Endothelial cell of umbilical vein (primary cell): ENCODE measurements at regions of chr5 and their contacts with region 1.

Region 1: GRCh38 chr5:5421961-5422818 is at the start of gene ICE1:
- DNase-seq: peak; percentile 97
- H3K4me3 ChIP-seq: peak within 1 kb of the TSS; percentile 75 to 78 (median 78)
- H3K27ac ChIP-seq: peak within 1 kb of the TSS; percentile 70
- H3K4me1 ChIP-seq: peaks cover 28% of the 10 kb centered on the region
- H3K27me3 ChIP-seq: no peaks in the 10 kb centered on the region
- CTCF ChIP-seq: no peak
- POLR2A ChIP-seq: peak; percentile 64
- total RNA-seq, gene ICE1: 29.1 and 32.1 TPM in 2 replicates

Region 2: DNA sequence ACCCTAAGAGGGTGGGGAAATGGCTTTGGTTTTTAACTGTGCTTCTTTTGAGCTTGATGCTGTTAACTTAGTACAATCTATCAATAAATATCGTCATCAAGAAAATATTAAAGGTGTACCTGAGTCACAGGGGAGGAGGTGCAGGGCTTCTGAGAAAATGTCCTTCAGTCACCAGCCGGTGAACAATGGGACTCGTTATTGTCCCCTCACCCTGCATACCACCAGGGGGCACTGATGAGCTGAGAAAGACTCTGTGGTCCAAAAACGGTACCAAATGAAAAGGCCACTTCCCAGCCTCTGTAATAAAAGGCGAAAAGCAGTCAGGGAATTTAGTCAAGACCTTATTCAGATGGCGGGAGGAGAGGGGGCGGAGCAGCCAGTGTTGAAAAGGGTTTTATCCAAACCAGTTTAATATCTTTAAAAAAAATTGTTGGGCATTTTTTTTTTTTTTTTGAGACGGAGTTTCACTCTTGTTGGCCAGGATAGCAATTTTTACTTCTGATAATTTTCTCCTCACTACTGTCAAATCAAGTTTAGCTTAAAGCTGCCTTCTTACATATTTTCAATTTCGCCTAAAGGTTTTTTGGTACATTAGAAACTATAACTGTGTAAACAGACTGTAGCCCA is 554.0 kb before region 1 on chr5:
- CTCF ChIA-PET with region 1: no interaction called
- POLR2A ChIA-PET with region 1: no interaction called
- dilution Hi-C with region 1: no loop called
- intact Hi-C with region 1: loop called (anchors 2 kb)
- DNase-seq: no peak
- H3K4me3 ChIP-seq: no peak overlapping the region
- H3K27ac ChIP-seq: no peak overlapping the region
- H3K4me1 ChIP-seq: no peaks in the 10 kb centered on the region
- H3K27me3 ChIP-seq: no peaks in the 10 kb centered on the region
- CTCF ChIP-seq: peak; percentile 52 to 55
- POLR2A ChIP-seq: no peak

Region 3: GRCh38 chr5:5141625-5142532 is 280.3 kb before region 1 on chr5:
- CTCF ChIA-PET with region 1: interaction called, 32 read pairs
- POLR2A ChIA-PET with region 1: no interaction called
- dilution Hi-C with region 1: no loop called
- intact Hi-C with region 1: no loop called
- DNase-seq: peak; percentile 45
- H3K4me3 ChIP-seq: no peak overlapping the region
- H3K27ac ChIP-seq: no peak overlapping the region
- H3K4me1 ChIP-seq: no peaks in the 10 kb centered on the region
- H3K27me3 ChIP-seq: peaks cover 9 to 13% of the 10 kb centered on the region in 2 experiments
- CTCF ChIP-seq: peak; percentile 39 to 46
- POLR2A ChIP-seq: no peak

Region 4: DNA sequence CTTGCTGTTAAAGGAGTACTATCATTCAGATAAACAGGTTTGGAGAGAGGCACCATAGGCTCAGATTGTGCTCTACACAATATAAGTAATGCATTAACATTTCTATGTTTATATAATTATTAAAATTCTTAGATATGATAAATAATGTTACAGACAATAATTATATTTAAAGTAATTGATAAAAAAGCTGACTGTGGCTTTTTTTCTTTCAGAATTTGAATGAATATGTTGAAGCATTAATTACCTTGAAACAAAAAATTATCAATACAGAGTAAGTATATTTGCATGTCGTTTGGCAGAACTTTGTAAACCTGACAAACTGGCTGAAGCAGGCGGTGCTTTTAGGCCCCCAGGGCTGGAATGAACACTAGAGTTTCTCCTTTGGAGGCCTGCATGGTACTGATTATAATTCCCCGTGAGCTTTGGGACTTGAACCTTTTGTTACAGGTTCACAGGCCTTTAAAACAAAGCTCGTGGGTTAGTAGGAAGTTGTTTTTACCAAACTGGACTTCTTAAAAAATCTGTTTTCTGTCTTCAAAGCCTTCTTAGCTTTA is 14.1 kb after region 1 on chr5:
- CTCF ChIA-PET with region 1: no interaction called
- POLR2A ChIA-PET with region 1: no interaction called
- dilution Hi-C with region 1: no loop called
- intact Hi-C with region 1: loop called (anchors 1 kb)
- DNase-seq: no peak
- H3K4me3 ChIP-seq: no peak overlapping the region
- H3K27ac ChIP-seq: no peak overlapping the region
- H3K4me1 ChIP-seq: peaks cover 11% of the 10 kb centered on the region
- H3K27me3 ChIP-seq: no peaks in the 10 kb centered on the region
- CTCF ChIP-seq: no peak
- POLR2A ChIP-seq: no peak

Region 5: DNA sequence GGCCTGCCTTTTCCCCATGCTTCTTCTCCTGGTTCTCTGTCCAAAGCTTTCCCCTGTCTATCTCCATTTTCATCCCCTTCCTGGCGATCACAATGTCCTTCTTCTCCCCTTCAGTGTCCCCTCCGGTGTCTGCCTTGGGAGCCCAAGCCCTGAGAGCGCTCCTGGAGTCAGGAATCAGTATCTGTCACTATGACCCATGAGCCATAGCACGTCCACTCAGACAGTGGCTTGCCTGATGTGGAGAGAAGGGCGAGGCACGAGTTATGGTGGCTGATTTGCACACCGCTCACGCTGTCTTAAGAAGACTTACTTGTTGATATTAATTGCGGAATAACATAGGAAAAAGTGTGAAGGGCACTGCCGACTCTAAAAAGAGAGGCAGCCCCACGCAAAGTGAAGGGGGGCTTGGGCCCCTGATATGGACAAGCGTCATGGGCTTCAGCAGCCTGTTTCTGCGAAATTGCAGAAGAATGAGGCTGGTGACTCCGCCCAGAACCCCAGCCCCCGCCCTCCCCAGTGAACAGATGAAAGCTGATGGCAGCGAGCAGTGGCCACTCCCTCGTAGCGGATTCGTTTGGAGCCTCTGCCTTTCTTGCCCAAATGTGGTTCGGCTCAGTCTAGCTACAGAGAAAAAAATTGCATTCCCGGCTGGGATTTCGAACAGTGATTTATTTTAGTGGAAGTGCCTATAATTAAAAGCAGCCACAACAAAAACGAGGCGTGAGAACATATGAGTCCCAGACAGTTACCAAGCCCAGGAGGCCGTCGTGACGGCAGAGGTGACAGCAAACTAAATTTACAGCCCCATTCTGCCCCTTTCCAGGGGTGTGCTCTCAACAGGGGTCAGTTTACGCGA is 150.0 kb after region 1 on chr5:
- CTCF ChIA-PET with region 1: no interaction called
- POLR2A ChIA-PET with region 1: no interaction called
- dilution Hi-C with region 1: no loop called
- intact Hi-C with region 1: no loop called
- DNase-seq: no peak
- H3K4me3 ChIP-seq: no peak overlapping the region
- H3K27ac ChIP-seq: no peak overlapping the region
- H3K4me1 ChIP-seq: no peaks in the 10 kb centered on the region
- H3K27me3 ChIP-seq: no peaks in the 10 kb centered on the region
- CTCF ChIP-seq: no peak
- POLR2A ChIP-seq: no peak

Region 6: DNA sequence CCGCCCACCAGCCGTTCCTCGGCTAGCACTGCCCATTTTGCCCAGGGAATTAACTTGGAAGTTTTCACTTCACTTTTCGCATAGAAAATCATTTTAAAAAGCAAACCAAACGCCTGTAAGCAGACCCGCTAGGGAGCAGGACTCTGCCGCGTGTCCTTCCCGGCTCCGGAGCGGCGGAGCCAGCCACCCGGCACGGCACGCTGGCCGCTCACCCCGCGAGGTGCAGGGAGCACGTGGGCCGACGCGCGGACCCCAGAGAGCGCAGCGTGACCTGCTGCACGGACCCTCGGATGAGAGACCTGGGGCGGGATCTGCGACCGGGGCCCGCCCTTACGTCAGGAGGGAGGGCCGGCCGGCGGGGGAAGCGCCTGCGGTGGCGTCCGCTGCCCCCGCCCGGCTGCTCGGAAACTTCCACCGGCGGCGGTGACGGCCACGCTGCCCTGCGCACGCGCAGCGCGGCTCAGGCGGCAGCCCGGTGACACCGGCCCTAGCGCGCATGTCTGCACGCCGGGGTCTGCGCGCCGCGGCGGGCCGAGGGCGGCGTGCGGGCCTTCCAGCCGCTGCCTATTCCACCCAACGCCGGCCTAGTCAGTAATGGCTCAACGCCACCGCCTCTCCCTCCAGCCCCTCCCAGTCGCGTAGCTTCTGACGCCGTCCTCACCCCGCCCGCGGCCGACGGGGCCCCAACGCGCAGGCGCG is 1290.5 kb after region 1 on chr5:
- CTCF ChIA-PET with region 1: no interaction called
- POLR2A ChIA-PET with region 1: no interaction called
- dilution Hi-C with region 1: no loop called
- intact Hi-C with region 1: loop called (anchors 2 kb)
- DNase-seq: peak; percentile 98
- H3K4me3 ChIP-seq: peak overlapping the region; percentile 44 to 74 (median 65)
- H3K27ac ChIP-seq: peak overlapping the region; percentile 65
- H3K4me1 ChIP-seq: peaks cover 25% of the 10 kb centered on the region
- H3K27me3 ChIP-seq: no peaks in the 10 kb centered on the region
- CTCF ChIP-seq: no peak
- POLR2A ChIP-seq: peak; percentile 83